T-cell (primary cell): ENCODE measurements at regions of chr12 and their contacts with region 1.

Region 1: DNA sequence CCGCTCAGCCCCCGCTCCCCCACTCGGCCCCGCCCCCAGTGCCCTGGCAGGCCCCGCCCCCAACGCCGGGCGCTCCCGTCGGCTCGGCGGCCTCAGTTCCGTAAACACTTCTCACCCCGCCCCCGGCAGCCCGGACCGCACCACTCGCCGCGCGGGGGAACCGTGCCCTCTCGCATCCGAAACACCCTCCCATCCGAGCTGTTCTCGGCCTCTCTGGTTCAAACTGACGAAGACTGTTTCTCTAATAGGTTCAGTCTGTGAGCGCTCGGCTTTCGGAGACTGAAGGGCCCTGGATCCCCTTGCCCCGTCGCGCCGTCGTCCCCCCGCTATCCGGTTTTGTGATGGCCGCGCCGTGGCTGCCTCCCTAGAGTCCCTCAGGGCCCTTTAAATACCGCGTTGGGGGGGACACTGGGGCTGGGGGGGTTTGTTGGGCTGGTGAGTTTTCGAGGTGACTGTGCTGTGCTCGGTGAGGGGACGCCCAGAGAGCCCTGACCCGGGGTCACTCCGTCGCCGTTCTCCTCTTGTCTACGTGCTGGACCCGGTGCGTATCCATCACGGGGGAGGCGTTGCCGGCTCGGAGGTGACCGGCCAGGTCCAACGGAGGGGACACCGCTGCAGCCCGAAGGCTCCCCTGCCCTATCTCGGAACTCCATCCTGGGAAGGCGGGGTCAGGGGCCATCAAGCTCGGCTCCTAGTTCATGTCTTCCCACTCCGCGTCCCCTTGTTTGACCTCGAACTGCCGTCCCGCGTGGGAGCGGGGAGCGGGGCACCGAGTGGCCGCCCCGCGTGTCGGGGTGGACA is at the start of gene TCP11L2:
- DNase-seq: peak; percentile 81 to 96 (median 92)
- ATAC-seq: peak; percentile 57 to 74 (median 64)
- H3K4me3 ChIP-seq: peak within 1 kb of the TSS; percentile 97 to 99
- H3K4me3 Mint-ChIP-seq: peak within 1 kb of the TSS; percentile 93 to 97 (median 96)
- H3K27ac ChIP-seq: peak within 1 kb of the TSS; percentile 100
- H3K27ac Mint-ChIP-seq: peak within 1 kb of the TSS; percentile 100
- H3K4me1 ChIP-seq: peaks cover 31 to 34% of the 10 kb centered on the region in 2 experiments
- H3K4me1 Mint-ChIP-seq: peaks cover 57 to 68% (median 62%) of the 10 kb centered on the region in 3 donors
- H3K27me3 ChIP-seq: no peaks in the 10 kb centered on the region
- H3K27me3 Mint-ChIP-seq: no peaks in the 10 kb centered on the region
- total RNA-seq, gene TCP11L2: 139 to 213 (median 157) TPM

Region 2: GRCh38 chr12:106234449-106234848 is 68.2 kb before region 1 on chr12:
- CTCF ChIA-PET with region 1: interaction called in 1 of 2 experiments, 5 read pairs
- POLR2A ChIA-PET with region 1: interaction called in 1 of 2 experiments, 10 read pairs
- DNase-seq: no peak
- ATAC-seq: no peak
- H3K4me3 ChIP-seq: no peak overlapping the region
- H3K4me3 Mint-ChIP-seq: no peak overlapping the region
- H3K27ac ChIP-seq: no peak overlapping the region
- H3K27ac Mint-ChIP-seq: no peak overlapping the region
- H3K4me1 ChIP-seq: no peaks in the 10 kb centered on the region
- H3K4me1 Mint-ChIP-seq: no peaks in the 10 kb centered on the region
- H3K27me3 ChIP-seq: peaks cover 0 to 2% of the 10 kb centered on the region in 2 experiments
- H3K27me3 Mint-ChIP-seq: no peaks in the 10 kb centered on the region

Region 3: DNA sequence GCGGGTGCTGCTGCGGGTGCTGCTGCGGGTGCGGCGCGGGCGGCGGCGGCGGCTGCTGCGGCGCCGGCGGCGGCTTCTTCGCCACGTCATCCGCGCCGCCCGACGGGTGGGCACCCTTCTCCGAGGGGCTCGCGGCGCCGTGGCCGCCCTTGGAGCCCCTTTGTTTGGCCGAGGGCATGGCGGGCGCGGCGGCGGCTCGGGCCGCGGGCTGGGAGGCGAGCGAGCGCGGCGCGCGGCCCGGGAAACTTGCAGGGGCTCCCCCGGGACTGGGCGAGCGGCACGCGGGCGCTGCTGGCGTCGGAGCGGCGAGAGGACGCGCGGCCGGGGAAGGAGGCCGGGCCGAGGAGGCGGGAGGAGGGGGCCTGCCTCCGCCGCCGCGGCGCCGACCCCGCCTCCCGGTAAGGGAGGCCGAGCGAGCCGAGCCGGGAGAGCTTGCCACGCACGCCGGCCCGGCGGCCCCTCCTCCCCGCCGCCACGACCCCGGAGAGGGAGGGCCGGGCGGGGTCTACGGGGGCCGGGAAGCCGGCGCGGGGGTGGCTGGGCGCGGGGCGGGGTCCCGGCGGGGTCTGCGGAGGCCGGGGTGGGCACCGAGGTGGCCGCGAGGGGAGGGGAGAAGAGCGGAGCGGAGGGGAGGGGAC is 54.8 kb before region 1 on chr12 and contains the start of gene CKAP4:
- CTCF ChIA-PET with region 1: no interaction called
- POLR2A ChIA-PET with region 1: interaction called in 1 of 2 experiments, 10 read pairs
- DNase-seq: peak in 34 of 35 experiments; percentile 9 to 80 (median 40)
- ATAC-seq: peak; percentile 62 to 76 (median 70)
- H3K4me3 ChIP-seq: peak within 1 kb of the TSS; percentile 77 to 80
- H3K4me3 Mint-ChIP-seq: peak within 1 kb of the TSS; percentile 81 to 82 (median 82)
- H3K27ac ChIP-seq: peak within 1 kb of the TSS; percentile 92
- H3K27ac Mint-ChIP-seq: peak within 1 kb of the TSS; percentile 84 to 94
- H3K4me1 ChIP-seq: peaks cover 3 to 25% of the 10 kb centered on the region in 2 experiments
- H3K4me1 Mint-ChIP-seq: peaks cover 27 to 43% (median 40%) of the 10 kb centered on the region in 3 donors
- H3K27me3 ChIP-seq: no peaks in the 10 kb centered on the region
- H3K27me3 Mint-ChIP-seq: no peaks in the 10 kb centered on the region
- total RNA-seq, gene CKAP4: 9.0 to 13.8 (median 11.7) TPM

Region 4: DNA sequence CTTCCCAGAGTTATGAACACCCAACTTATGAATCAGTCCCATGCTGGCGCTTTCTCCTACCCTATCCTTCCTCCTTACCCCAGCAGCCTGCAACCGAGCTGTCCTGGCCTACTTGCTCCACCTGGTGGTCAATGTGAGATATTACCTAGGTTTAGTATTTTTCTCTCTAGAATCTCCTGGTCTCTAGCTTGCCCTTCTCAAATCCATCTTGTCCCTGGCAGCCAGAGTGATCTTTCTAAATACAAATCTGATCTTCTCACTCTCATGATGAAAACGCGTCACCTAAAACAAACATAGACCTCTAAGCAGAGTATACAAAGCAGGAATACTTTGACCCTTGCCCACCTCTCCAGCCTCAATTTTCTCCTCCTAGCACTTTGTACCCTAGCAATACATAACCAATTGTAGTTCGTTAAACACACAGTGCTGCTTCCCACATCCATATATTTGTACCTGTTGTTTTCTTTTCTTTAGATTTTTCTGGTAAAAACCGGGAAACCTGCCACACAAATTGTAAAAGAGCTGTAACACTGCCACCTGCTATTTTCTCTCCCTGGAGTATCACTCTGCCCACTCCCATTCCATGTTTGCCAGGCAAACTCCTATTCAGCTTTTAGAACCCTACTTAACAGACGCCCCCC is 20.0 kb before region 1 on chr12:
- CTCF ChIA-PET with region 1: interaction called, 5 to 13 read pairs
- POLR2A ChIA-PET with region 1: interaction called, 3 to 4 read pairs
- DNase-seq: peak in 33 of 35 experiments; percentile 12 to 78 (median 31)
- ATAC-seq: peak; percentile 69 to 75 (median 75)
- H3K4me3 ChIP-seq: no peak overlapping the region
- H3K4me3 Mint-ChIP-seq: no peak overlapping the region
- H3K27ac ChIP-seq: no peak overlapping the region
- H3K27ac Mint-ChIP-seq: no peak overlapping the region
- H3K4me1 ChIP-seq: no peaks in the 10 kb centered on the region
- H3K4me1 Mint-ChIP-seq: peaks cover 0 to 1% (median 0%) of the 10 kb centered on the region in 3 donors
- H3K27me3 ChIP-seq: peaks cover 4 to 9% of the 10 kb centered on the region in 2 experiments
- H3K27me3 Mint-ChIP-seq: peaks cover 11% of the 10 kb centered on the region in 2 donors

Region 5: DNA sequence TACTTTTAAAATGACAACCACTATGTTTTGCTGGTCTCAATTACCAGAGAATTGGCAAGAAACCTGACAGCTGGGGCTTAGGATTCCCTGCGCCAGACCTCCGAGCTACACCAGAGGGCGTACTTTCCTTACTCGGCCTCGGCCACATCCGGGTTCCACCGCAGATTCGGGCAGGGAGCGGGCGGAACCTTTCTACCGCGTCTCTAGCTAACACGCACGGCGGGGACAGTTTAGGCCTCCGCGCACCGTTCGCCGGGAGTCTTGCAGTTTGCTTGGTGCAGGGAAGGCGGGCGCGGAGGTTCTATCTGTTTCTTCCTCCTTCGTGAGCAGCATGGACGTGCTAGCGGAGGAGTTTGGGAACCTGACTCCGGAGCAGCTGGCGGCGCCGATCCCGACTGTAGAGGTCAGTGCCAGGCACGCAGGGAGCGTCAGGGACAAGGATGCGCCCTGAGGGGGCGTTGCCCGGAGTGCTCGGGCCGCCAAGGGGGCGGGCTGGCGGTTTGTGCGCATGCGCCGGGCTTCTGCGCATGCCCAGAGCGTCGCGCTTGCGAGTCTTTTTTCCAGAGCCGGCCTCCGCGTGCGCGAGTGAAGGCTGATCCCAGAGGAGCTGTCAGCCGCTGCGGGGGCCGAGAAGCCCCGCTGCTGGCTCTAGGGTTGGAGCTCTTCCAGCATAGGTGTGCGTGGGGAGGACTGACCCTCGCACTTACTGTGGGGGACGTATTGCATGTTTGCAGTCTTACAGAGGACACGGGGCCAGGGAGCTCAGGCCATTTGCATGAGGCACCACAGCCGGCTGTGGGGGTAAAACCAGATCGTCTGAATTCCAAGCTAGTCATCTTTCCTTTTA is 55.2 kb after region 1 on chr12 and contains the start of gene POLR3B:
- CTCF ChIA-PET with region 1: interaction called in 1 of 2 experiments, 17 read pairs
- POLR2A ChIA-PET with region 1: interaction called in 1 of 2 experiments, 7 read pairs
- DNase-seq: peak; percentile 92 to 98 (median 96)
- ATAC-seq: peak; percentile 91 to 93 (median 92)
- H3K4me3 ChIP-seq: peak within 1 kb of the TSS; percentile 80 to 89
- H3K4me3 Mint-ChIP-seq: peak within 1 kb of the TSS; percentile 89 to 94 (median 93)
- H3K27ac ChIP-seq: peak within 1 kb of the TSS; percentile 80
- H3K27ac Mint-ChIP-seq: peak within 1 kb of the TSS; percentile 92 to 96
- H3K4me1 ChIP-seq: peaks cover 10 to 13% of the 10 kb centered on the region in 2 experiments
- H3K4me1 Mint-ChIP-seq: peaks cover 17 to 18% (median 17%) of the 10 kb centered on the region in 3 donors
- H3K27me3 ChIP-seq: no peaks in the 10 kb centered on the region
- H3K27me3 Mint-ChIP-seq: no peaks in the 10 kb centered on the region
- total RNA-seq, gene POLR3B: 6.3 to 8.4 (median 7.0) TPM